ENCODE measurements at regions of chr22 and their contacts with region 1.

Region 1: DNA sequence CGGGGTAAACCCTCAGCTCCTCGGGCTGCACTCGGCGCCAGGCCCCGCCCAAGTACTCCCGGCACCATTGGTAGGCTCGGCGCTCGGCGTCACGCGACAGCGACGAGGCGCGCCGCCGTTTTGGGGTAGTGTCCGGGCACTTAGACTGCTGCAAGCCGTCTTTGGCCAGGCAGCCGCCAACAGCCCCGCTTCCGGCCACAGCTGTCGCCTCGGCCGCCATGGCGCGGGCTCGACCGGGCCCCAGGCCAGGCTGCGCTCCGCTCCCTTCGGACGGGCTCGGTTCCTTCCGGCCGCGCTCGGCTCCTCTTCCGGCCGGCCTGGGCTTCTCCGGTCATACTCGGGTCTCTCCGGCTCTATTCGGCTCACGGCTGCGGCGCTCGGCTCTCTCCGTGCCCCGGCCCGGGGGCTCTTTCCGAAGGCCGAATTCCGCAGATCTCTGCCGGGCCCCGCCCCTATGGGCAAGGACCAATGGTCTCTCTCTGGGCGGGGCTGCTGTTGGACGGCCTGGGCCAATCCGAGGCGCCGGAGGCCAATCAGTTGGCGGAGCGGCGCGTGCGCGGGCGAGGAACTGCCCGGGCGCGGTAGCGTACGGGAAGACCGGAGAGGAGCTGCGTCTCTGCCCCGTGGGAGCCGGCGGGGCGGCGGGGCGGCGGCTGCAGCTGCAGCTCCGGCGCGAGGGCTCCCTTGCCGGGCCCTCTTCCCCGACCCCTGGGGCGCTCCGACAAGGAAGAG is at the start of gene CHKB:
- DNase-seq: peak; percentile 96
- ATAC-seq: peak; percentile 94
- H3K4me3 Mint-ChIP-seq: peak within 1 kb of the TSS; percentile 87
- H3K27ac Mint-ChIP-seq: peak within 1 kb of the TSS; percentile 84
- H3K4me1 Mint-ChIP-seq: peaks cover 26% of the 10 kb centered on the region
- H3K27me3 Mint-ChIP-seq: no peaks in the 10 kb centered on the region
- CTCF ChIP-seq: no peak
- total RNA-seq, gene CHKB: 138 and 158 TPM in 2 replicates

Region 2: DNA sequence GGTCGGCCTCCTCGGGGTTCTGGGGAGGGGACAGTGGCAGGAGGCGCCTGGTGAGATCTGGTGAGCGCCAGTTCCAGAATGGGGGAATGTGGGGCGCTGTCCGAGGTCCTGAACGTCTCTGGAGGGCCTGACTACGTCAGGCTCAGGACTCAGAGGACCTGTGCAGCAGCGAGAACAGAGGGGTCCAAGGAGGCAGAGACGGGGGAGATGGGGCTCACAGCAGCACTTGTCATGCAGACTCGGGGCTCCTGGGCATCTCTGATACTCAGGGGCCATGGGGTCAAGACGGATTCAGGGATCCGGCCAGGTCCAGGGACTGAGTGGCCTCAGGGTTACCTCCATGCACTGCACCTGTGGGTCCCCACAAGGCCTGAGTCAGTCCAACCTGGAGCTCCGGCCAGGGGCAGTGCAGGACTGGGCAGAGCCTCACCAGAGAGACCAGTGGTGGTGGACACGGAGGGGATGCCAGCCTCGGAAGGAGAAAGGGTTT is 847.3 kb before region 1 on chr22:
- CTCF ChIA-PET with region 1: no interaction called
- POLR2A ChIA-PET with region 1: no interaction called
- intact Hi-C with region 1: no loop called
- DNase-seq: no peak
- ATAC-seq: no peak
- H3K4me3 Mint-ChIP-seq: no peak overlapping the region
- H3K27ac Mint-ChIP-seq: no peak overlapping the region
- H3K4me1 Mint-ChIP-seq: no peaks in the 10 kb centered on the region
- H3K27me3 Mint-ChIP-seq: peaks cover 38% of the 10 kb centered on the region
- CTCF ChIP-seq: no peak

Region 3: GRCh38 chr22:50469377-50470305 is 113.1 kb before region 1 on chr22:
- CTCF ChIA-PET with region 1: no interaction called
- POLR2A ChIA-PET with region 1: interaction called, 4 read pairs
- intact Hi-C with region 1: loop called (anchors 1 kb)
- DNase-seq: peak; percentile 84
- ATAC-seq: peak; percentile 81
- H3K4me3 Mint-ChIP-seq: peak overlapping the region; percentile 68
- H3K27ac Mint-ChIP-seq: peak overlapping the region; percentile 88
- H3K4me1 Mint-ChIP-seq: peaks cover 69% of the 10 kb centered on the region
- H3K27me3 Mint-ChIP-seq: no peaks in the 10 kb centered on the region
- CTCF ChIP-seq: no peak

Region 4: DNA sequence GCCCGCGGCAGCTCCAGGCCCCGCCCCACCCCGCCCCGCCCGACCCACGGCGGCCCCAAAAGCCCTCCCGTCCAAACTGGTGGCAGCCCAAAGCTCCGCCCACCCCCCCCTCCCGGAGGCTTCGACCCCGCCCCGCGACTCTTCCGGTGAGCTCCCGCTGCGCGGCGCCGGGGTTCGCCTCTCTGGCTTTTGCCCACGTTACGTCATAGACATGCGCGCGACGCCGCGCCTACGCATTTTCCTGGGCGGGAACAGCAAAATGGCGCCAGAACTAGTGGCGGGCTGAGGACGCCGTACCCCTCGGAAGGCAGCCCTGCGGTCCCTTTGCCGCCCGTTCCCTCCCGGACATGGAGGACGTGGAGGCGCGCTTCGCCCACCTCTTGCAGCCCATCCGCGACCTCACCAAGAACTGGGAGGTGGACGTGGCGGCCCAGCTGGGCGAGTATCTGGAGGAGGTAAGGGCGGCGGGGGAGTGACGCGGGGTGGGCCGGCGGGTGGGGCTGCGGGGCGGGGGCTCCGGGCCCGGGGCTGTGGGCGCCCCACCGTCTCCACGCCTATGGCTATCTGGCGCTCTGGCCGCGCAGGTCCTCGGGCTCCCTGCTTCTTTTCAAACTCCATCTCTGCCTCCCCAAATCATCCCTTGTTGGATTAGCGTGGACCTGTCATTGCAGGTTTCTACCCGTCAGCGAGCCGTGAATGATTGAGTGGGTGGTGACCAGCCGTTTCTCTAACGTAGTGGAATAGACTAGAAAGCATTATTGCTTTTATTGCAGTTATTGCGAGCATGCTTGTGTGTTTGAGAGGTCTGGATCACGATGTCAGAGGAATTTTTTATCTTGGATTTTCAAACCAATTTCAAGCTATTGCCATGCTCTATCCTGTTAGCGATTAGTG is 74.5 kb before region 1 on chr22 and contains the start of gene NCAPH2:
- CTCF ChIA-PET with region 1: no interaction called
- POLR2A ChIA-PET with region 1: interaction called, 7 read pairs
- intact Hi-C with region 1: loop called (anchors 1 kb)
- DNase-seq: peak; percentile 96
- ATAC-seq: peak; percentile 74
- H3K4me3 Mint-ChIP-seq: peak within 1 kb of the TSS; percentile 94
- H3K27ac Mint-ChIP-seq: peak within 1 kb of the TSS; percentile 94
- H3K4me1 Mint-ChIP-seq: peaks cover 20% of the 10 kb centered on the region
- H3K27me3 Mint-ChIP-seq: no peaks in the 10 kb centered on the region
- CTCF ChIP-seq: no peak
- total RNA-seq, gene NCAPH2: 63.9 and 68.2 TPM in 2 replicates

Region 5: GRCh38 chr22:50530877-50531545 is 51.7 kb before region 1 on chr22:
- CTCF ChIA-PET with region 1: interaction called, 9 read pairs
- POLR2A ChIA-PET with region 1: interaction called, 101 read pairs
- intact Hi-C with region 1: loop called (anchors 1 kb)
- DNase-seq: peak; percentile 86
- ATAC-seq: peak; percentile 53
- H3K4me3 Mint-ChIP-seq: peak overlapping the region; percentile 92
- H3K27ac Mint-ChIP-seq: peak overlapping the region; percentile 99
- H3K4me1 Mint-ChIP-seq: peaks cover 55% of the 10 kb centered on the region
- H3K27me3 Mint-ChIP-seq: no peaks in the 10 kb centered on the region
- CTCF ChIP-seq: no peak

Region 6: GRCh38 chr22:50544078-50544745 is 38.5 kb before region 1 on chr22:
- CTCF ChIA-PET with region 1: no interaction called
- POLR2A ChIA-PET with region 1: interaction called, 30 read pairs
- intact Hi-C with region 1: loop called (anchors 1 kb)
- DNase-seq: peak; percentile 80
- ATAC-seq: peak; percentile 38
- H3K4me3 Mint-ChIP-seq: peak overlapping the region; percentile 60
- H3K27ac Mint-ChIP-seq: peak overlapping the region; percentile 82
- H3K4me1 Mint-ChIP-seq: peaks cover 56% of the 10 kb centered on the region
- H3K27me3 Mint-ChIP-seq: no peaks in the 10 kb centered on the region
- CTCF ChIP-seq: no peak

Region 7: GRCh38 chr22:50599786-50600455 is 17.2 kb after region 1 on chr22:
- CTCF ChIA-PET with region 1: no interaction called
- POLR2A ChIA-PET with region 1: no interaction called
- intact Hi-C with region 1: loop called (anchors 2 kb)
- DNase-seq: peak; percentile 66
- ATAC-seq: peak; percentile 96
- H3K4me3 Mint-ChIP-seq: peak overlapping the region; percentile 72
- H3K27ac Mint-ChIP-seq: no peak overlapping the region
- H3K4me1 Mint-ChIP-seq: peaks cover 12% of the 10 kb centered on the region
- H3K27me3 Mint-ChIP-seq: peaks cover 29% of the 10 kb centered on the region
- CTCF ChIP-seq: no peak

Measured in activated B cell treated with CpG ODN at 0.5 μM for 24 hours (primary cell).